Left ventricle myocardium inferior (tissue), 1 donor: ENCODE measurements at regions of chr3 and their contacts with region 1.

Region 1: DNA sequence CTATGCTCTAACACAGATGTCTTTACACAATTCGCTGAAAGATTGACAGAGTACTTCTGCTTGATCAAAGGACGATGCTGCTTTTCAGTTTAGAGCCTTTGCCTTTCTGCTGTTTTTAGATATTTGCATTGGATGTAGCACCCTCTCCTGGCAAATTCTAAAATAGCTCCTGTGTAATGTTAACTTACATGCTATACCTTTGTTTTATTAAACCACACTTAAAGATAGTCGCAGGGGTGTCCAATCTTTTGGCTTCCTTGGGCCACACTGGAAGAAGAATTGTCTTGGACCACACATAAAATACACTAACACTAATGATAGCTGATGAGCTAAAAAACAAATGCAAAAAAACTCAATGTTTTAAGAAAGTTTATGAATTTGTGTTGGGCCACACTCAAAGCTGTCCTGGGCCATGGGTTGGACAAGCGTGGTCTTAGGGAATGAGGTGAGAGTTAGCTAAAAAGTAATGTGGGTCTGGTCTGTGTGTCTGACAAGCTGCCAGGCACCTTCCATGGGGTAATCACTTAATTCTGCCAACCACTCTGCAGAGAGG is 62.9 kb downstream of the ATG7 start:
- DNase-seq: no peak
- H3K4me3 ChIP-seq: no peak overlapping the region
- H3K27ac ChIP-seq: no peak overlapping the region
- H3K4me1 ChIP-seq: no peaks in the 10 kb centered on the region
- H3K27me3 ChIP-seq: no peaks in the 10 kb centered on the region
- CTCF ChIP-seq: peak; percentile 73

Region 2: DNA sequence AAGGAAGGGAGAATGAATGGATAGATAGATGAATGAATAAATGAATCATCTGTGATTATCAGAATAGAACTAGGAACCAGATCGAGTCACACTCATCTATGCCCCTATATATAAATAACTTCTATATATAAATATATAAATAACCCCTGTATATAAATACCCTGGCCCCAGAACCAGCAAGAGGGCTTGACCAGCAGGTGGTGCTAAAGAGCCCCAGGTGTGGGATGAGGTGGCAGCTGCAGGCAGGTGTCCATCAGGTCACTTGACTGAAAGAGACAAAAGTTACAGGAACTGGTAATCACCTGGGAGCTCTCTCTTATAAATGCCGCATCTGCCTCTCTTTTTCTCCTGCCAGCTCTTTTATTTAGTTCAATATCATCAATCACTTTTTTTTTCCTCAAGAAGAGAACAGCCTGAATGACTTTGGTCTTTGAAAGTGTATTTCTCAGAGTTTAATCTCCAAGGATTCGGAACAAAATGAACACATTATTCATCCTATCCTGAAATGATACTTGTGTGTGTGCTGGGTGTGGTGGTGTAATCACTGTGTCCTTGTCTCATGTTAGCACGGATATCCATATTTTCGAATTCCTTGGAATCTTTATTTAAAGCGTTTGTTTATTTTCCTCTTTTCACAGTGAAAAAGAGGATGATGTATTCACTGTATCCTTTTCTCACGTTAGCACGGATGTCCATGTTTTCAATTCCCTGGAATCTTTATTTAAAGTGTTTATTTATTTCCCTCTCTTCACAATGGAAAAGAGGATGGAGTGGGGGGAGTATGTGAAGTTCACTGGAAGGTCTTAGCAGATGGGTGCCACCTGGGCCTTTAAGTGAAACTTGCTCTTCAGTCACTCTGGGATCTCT is 98.3 kb before region 1 on chr3:
- intact Hi-C with region 1: loop called (anchors 10 kb)
- DNase-seq: peak; percentile 41
- H3K4me3 ChIP-seq: no peak overlapping the region
- H3K27ac ChIP-seq: no peak overlapping the region
- H3K4me1 ChIP-seq: no peaks in the 10 kb centered on the region
- H3K27me3 ChIP-seq: peaks cover 16% of the 10 kb centered on the region
- CTCF ChIP-seq: peak; percentile 79